Dorsolateral prefrontal cortex (tissue), 120 donors: ENCODE measurements at regions of chr17 and their contacts with region 1.

Region 1: DNA sequence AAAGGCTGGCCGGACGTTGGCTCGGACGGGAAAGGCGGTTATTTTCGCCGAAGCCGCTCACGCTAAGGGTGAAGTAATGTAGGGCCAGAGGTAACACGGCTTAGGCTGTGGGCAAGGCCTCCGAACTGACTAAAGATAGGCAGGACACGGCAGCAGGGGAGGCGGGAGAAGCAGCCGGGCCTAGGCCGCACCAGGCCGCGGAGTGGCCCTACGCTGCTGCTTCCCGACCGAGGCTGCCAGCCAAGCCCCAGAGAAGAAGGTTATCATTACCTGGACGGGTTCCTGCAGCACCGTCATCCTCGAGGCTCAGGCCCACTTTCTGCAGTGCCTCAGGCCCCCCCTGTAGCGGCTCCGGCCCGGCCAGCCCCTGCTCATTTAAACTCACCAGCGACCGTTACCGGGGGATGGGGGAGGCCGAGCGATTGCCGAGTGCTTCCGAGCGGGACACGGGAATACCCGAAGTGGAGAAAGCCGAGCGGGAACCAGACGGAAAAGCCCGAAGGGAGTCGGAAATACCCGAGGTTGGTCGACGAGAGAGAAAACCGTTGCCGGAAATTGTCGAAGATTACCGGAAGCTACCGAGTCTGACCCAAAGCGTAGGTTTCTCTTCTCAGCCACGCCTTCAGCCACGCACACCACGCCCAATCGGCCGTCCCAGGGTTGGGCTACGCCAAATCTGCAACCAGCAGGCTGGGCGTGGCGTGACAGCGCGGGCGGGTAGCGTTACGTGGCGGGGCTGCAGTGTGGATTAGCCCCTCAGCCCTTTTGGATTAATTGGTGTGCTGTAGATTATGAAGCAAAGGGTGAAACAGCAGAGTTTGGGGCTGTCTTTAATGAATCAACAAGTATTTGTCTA is at the start of gene CDC27:
- DNase-seq: peak; percentile 91 to 97 (median 95)
- H3K4me3 ChIP-seq: peak within 1 kb of the TSS; percentile 70 to 99 (median 90)
- H3K27ac ChIP-seq: peak within 1 kb of the TSS; percentile 63 to 99 (median 91)
- H3K27me3 ChIP-seq: no peaks in the 10 kb centered on the region
- CTCF ChIP-seq: peak in 18 of 56 donors; percentile 4 to 45 (median 21)
- total RNA-seq, gene CDC27: 73.6 to 163 (median 117) TPM

Region 2: GRCh38 chr17:47087093-47087492 is 102.0 kb before region 1 on chr17:
- intact Hi-C with region 1: no loop called
- DNase-seq: no peak
- H3K4me3 ChIP-seq: no peak overlapping the region
- H3K27ac ChIP-seq: no peak overlapping the region
- H3K27me3 ChIP-seq: no peaks in the 10 kb centered on the region
- CTCF ChIP-seq: no peak

Region 3: GRCh38 chr17:47099987-47100711 is 89.0 kb before region 1 on chr17:
- intact Hi-C with region 1: loop called in 1 of 2 experiments (anchors 2 kb)
- DNase-seq: peak; percentile 79 to 96 (median 90)
- H3K4me3 ChIP-seq: peak overlapping the region; percentile 57 to 99 (median 91)
- H3K27ac ChIP-seq: peak overlapping the region in 56 of 59 donors; percentile 43 to 95 (median 84)
- H3K27me3 ChIP-seq: no peaks in the 10 kb centered on the region
- CTCF ChIP-seq: peak in 25 of 56 donors; percentile 9 to 44 (median 24)

Region 4: DNA sequence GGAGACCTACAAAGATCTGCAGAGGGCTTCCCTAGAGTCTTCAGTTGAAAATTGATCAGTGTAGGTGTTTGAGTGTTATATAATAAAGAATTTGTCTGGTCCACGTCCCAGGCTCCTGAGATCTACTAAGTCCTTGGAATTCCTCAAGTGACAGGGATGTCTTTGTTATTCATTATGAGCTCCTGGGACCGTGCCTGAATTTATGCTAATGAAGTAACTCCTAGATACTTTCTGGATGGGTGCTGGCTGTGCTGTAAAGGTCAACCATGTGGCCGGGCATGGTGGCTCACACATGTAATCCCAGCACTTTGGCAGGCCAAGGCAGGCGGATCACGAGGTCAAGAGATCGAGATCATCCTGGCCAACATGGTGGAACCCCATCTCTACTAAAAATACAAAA is 43.8 kb before region 1 on chr17:
- intact Hi-C with region 1: no loop called
- DNase-seq: no peak
- H3K4me3 ChIP-seq: no peak overlapping the region
- H3K27ac ChIP-seq: no peak overlapping the region
- H3K27me3 ChIP-seq: no peaks in the 10 kb centered on the region
- CTCF ChIP-seq: no peak